Heart left ventricle (tissue), 16 donors: ENCODE measurements at regions of chr7 and their contacts with region 1.

Region 1: GRCh38 chr7:148503875-148504487 is 86.6 kb upstream of the C7orf33 start:
- DNase-seq: no peak
- ATAC-seq: no peak
- H3K4me3 ChIP-seq: no peak overlapping the region
- H3K27ac ChIP-seq: no peak overlapping the region
- H3K4me1 ChIP-seq: no peaks in the 10 kb centered on the region
- H3K27me3 ChIP-seq: peaks cover 0 to 21% (median 4%) of the 10 kb centered on the region in 9 donors
- CTCF ChIP-seq: peak; percentile 66 to 86 (median 79)
- POLR2A ChIP-seq: no peak

Region 2: DNA sequence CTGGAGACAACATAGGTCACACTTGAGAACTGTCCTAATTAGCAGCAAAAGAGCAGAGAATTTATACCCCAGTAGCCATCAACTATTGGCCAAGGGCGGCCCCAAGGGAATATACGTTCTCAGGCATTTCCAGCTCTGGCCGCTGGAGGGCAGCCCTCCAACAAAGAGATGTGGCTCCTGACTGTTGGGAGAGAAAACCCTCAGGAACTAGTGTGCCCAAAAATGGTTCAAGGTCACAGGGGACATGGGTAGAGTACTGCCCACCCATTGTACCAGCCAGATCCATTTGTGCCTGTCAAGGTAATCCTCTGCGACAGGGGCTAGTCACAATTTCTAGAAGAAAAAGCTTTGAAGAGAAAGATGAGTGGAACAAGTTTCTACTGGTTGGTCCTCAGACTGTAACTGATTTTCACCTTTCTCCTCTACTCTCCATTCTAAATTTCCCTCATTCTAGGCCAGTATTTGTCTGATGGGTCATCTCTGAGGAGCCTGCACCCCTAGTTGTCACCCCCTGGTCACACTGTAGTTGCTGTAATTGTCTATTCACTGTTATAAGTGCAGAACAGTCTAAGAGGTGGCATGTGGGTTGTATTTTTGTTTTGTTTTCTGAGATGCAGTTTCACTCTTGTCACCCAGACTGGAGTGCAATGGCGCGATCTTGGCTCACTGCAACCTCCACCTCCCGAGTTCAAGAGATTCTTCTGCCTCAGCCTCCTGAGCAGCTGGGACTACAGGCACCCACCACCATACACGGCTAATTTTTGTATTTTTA is 71.8 kb after region 1 on chr7:
- intact Hi-C with region 1: loop called in 1 of 10 experiments (anchors 5 kb)
- DNase-seq: peak; percentile 43 to 73 (median 59)
- ATAC-seq: peak in 3 of 4 donors; percentile 62 to 70 (median 68)
- H3K4me3 ChIP-seq: no peak overlapping the region
- H3K27ac ChIP-seq: no peak overlapping the region
- H3K4me1 ChIP-seq: peaks cover 0 to 9% (median 0%) of the 10 kb centered on the region in 12 donors
- H3K27me3 ChIP-seq: no peaks in the 10 kb centered on the region
- CTCF ChIP-seq: peak; percentile 68 to 86 (median 78)
- POLR2A ChIP-seq: no peak

Region 3: GRCh38 chr7:148819697-148820360 is 315.8 kb after region 1 on chr7:
- intact Hi-C with region 1: no loop called
- DNase-seq: no peak
- ATAC-seq: no peak
- H3K4me3 ChIP-seq: no peak overlapping the region
- H3K27ac ChIP-seq: no peak overlapping the region
- H3K4me1 ChIP-seq: no peaks in the 10 kb centered on the region
- H3K27me3 ChIP-seq: no peaks in the 10 kb centered on the region
- CTCF ChIP-seq: no peak
- POLR2A ChIP-seq: no peak